Right ventricle myocardium inferior (tissue), 1 donor: ENCODE measurements at regions of chr1 and their contacts with region 1.

Region 1: GRCh38 chr1:167220537-167221125 is at the start of gene POU2F1:
- DNase-seq: peak; percentile 100
- ATAC-seq: peak; percentile 96
- total RNA-seq, gene POU2F1: 7.5 TPM

Region 2: GRCh38 chr1:166875734-166876539 is 344.7 kb before region 1 on chr1 and contains the start of gene TADA1:
- intact Hi-C with region 1: loop called (anchors 10 kb)
- DNase-seq: peak; percentile 99
- ATAC-seq: peak; percentile 98
- total RNA-seq, gene TADA1: 9.4 TPM

Region 3: DNA sequence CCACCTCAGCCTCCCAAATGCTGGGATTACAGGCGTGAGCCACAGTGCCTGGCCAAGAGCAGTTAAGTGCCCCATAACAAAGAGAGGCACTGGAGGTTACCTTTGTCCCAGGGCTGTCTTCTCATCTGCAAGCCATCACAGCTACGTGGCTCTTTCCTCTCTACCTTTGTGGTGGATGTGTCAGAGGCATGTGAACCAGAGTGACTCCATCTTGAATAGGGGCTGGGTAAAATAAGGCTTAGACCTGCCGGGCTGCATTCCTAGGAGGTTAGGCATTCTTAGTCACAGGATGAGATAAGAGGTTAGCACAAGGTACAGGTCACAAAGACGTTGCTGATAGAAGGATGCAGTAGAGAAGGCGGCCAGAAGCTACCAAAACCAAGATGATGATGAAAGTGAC is 59.4 kb before region 1 on chr1:
- intact Hi-C with region 1: no loop called
- DNase-seq: no peak
- ATAC-seq: no peak